Kidney (tissue), 22 donors: ENCODE measurements at regions of chr20 and their contacts with region 1.

Region 1: DNA sequence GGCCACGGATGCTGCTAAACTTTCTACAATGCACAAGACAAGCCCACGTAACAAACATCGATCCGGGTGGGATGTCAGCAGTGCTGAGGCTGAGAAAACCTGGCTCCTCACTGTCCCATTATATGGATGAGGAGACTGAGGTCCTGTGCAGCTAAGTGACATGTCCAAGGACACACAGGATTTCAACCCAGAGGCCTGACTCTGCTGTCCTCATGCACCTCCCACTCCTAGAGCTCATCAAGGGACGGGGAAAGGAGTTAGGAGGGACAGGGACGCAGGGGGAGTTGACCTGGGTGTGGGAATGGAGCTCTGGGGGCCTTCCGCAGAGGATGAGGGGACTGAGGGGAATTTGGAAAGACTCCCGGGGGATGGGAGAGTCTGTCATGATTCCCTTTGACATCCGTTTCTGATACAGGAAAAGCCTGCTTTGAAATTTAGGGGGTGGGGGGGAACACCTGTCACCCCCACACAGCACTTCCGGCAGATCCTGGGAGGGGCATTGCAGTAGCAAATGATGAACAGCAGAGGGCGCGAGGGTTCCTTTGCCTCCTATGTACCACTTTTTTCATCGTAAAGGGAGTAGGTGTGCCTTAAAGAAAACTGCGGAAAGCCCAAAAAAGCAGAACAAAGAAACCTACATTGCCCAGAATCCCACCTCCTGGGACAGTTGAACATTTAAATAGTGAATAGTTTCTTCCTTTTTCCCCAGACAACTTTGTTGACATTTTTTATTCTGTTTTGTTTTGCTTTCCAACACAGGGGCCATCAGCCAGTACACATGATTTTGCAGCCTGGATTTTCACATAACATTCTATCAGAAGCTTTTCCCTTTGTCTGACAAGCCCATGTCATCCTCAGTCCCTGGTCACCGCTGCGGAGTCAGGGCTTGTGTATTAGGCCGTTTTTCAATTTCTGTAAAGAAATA is 48.6 kb downstream of the SLC2A10 start:
- DNase-seq: peak in 4 of 5 donors; percentile 66 to 81 (median 71)
- H3K4me3 ChIP-seq: no peak overlapping the region
- H3K27ac ChIP-seq: no peak overlapping the region
- H3K4me1 ChIP-seq: no peaks in the 10 kb centered on the region
- H3K27me3 ChIP-seq: no peaks in the 10 kb centered on the region
- CTCF ChIP-seq: peak; percentile 72

Region 2: GRCh38 chr20:46512943-46513844 is 244.8 kb before region 1 on chr20 and contains the start of gene ZNF334:
- intact Hi-C with region 1: no loop called
- DNase-seq: peak; percentile 80 to 92 (median 90)
- H3K4me3 ChIP-seq: peak within 1 kb of the TSS; percentile 71 to 90 (median 79)
- H3K27ac ChIP-seq: no peak within 1 kb of the TSS
- H3K4me1 ChIP-seq: no peaks in the 10 kb centered on the region
- H3K27me3 ChIP-seq: no peaks in the 10 kb centered on the region
- CTCF ChIP-seq: no peak
- total RNA-seq, gene ZNF334: 8.2 TPM

Region 3: GRCh38 chr20:46651091-46651962 is 106.7 kb before region 1 on chr20 and contains the start of gene SLC13A3:
- intact Hi-C with region 1: no loop called
- DNase-seq: peak in 4 of 5 donors; percentile 31 to 52 (median 46)
- H3K4me3 ChIP-seq: peak within 1 kb of the TSS in 2 of 3 donors; percentile 73 to 85
- H3K27ac ChIP-seq: peak within 1 kb of the TSS; percentile 81 to 91
- H3K4me1 ChIP-seq: no peaks in the 10 kb centered on the region
- H3K27me3 ChIP-seq: no peaks in the 10 kb centered on the region
- CTCF ChIP-seq: no peak
- total RNA-seq, gene SLC13A3: 31.5 TPM

Region 4: DNA sequence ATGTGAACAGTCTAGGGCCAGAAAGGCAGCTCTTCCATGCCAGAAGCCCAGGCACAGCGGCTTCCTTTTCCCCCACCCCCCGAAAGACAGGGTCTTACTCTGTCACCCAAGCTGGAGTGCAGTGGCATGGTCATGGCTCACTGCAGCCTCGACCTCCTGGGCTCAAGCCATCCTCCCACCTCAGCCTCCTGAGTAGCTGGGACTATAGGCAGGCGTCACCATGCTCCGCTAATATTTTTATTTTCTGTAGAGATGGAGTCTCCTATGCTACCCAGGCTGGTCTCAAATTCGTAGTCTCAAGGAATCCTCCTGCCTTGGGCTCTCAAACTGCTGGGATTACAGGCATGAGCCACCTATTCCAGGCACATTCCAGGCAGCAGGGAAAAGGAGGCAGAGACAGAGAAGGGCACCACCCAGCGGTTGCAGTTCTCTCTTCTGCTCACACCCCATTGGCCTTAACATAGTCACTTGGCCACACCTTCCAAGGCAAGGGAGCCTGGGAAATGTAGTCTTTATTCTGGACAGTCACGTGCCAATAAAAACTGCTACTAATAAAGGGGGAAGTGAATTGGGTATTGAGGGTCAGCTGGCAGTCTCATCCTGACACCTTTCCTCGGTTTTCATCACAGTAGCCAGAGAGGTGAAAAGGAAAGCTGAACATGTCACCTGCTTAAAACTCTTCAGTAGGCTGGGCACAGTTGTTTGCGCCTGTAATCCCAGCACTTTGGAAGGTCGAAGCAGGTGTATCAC is 392.6 kb after region 1 on chr20:
- intact Hi-C with region 1: loop called (anchors 10 kb)
- DNase-seq: peak in 4 of 5 donors; percentile 78 to 89 (median 86)
- H3K4me3 ChIP-seq: no peak overlapping the region
- H3K27ac ChIP-seq: no peak overlapping the region
- H3K4me1 ChIP-seq: no peaks in the 10 kb centered on the region
- H3K27me3 ChIP-seq: no peaks in the 10 kb centered on the region
- CTCF ChIP-seq: peak; percentile 60

Region 5: DNA sequence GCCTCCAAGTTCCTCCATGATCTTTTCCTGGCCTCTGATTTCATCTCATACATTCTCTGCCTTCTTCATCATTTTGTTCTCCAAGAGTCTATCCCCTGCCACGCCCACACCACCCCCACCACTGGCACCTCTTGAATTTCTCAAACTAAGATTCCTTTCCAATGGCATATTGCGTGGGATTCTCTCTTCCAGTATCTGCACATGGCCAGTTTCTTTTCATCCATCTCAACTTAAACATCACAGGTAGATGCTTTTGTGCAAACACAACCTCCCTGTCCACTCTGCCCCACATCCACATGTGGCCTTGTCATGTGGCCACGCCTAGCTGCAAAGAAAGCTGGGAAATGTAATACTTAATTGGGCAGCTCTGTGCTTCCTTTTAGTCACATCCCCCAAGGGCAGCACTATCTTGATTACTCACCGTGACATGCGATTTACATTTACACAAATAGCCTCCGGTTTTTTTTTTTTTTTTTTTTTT is 631.9 kb after region 1 on chr20:
- intact Hi-C with region 1: loop called (anchors 10 kb)
- DNase-seq: no peak
- H3K4me3 ChIP-seq: no peak overlapping the region
- H3K27ac ChIP-seq: no peak overlapping the region
- H3K4me1 ChIP-seq: no peaks in the 10 kb centered on the region
- H3K27me3 ChIP-seq: no peaks in the 10 kb centered on the region
- CTCF ChIP-seq: no peak